AG04450 (cell line): ENCODE measurements at regions of chr7 and their contacts with region 1.

Region 1: GRCh38 chr7:5574770-5575269 is 151.2 kb upstream of the TNRC18 start:
- DNase-seq: no peak
- H3K4me3 ChIP-seq: no peak overlapping the region
- H3K27ac ChIP-seq: no peak overlapping the region
- H3K27me3 ChIP-seq: peaks cover 4% of the 10 kb centered on the region
- CTCF ChIP-seq: no peak

Region 2: DNA sequence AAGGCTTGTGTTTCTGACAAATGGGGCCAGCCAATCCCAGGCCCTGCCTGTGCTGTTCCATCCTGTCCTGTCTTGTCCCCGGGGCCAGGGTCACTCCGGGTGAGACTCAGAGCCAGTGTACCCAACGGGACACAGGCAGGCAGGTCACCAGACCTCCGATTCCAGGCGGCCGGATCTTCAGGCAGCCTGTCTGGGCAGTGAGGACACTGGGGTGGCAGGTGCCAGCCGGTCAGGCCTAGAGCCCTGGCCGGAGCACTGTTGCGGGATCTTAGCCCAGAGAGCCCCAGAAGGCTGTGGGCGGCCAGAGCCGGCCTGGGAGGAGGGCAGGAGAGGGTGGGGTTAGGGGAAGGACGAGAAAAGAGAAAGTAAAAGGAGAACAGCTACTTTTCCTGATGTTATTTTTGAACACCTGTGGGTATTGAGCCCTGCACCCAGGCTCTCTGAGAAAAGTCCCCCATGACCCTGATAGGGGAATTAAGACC is 16.9 kb before region 1 on chr7:
- CTCF ChIA-PET with region 1: no interaction called
- POLR2A ChIA-PET with region 1: no interaction called
- DNase-seq: no peak
- H3K4me3 ChIP-seq: no peak overlapping the region
- H3K27ac ChIP-seq: peak overlapping the region; percentile 65
- H3K27me3 ChIP-seq: no peaks in the 10 kb centered on the region
- CTCF ChIP-seq: no peak

Region 3: DNA sequence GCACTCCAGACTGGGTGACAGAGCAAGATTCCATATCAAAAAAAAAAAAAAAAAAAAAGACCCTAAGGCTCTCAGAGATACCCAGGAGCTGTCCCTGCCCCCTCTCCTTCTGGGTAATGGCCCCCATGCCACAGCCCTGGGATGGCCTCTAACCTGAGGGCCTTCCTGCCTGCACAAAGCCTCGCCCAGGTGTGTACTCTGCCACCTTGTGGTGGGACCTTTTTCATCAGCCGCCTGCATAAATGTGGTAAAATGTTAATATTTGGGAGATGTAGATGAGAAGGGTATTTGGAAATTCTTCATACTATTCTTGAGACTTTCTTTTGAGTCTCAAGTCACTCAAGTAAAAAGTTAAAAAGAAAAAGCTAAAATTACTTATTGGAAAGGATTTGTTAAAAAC is 252.9 kb after region 1 on chr7:
- CTCF ChIA-PET with region 1: no interaction called
- POLR2A ChIA-PET with region 1: no interaction called
- DNase-seq: no peak
- H3K4me3 ChIP-seq: no peak overlapping the region
- H3K27ac ChIP-seq: no peak overlapping the region
- H3K27me3 ChIP-seq: no peaks in the 10 kb centered on the region
- CTCF ChIP-seq: peak; percentile 49

Region 4: GRCh38 chr7:6330657-6331056 is 755.8 kb after region 1 on chr7:
- CTCF ChIA-PET with region 1: interaction called, 11 read pairs
- POLR2A ChIA-PET with region 1: no interaction called
- DNase-seq: no peak
- H3K4me3 ChIP-seq: no peak overlapping the region
- H3K27ac ChIP-seq: no peak overlapping the region
- H3K27me3 ChIP-seq: no peaks in the 10 kb centered on the region
- CTCF ChIP-seq: no peak